ENCODE measurements at regions of chr15 and their contacts with region 1.

Region 1: DNA sequence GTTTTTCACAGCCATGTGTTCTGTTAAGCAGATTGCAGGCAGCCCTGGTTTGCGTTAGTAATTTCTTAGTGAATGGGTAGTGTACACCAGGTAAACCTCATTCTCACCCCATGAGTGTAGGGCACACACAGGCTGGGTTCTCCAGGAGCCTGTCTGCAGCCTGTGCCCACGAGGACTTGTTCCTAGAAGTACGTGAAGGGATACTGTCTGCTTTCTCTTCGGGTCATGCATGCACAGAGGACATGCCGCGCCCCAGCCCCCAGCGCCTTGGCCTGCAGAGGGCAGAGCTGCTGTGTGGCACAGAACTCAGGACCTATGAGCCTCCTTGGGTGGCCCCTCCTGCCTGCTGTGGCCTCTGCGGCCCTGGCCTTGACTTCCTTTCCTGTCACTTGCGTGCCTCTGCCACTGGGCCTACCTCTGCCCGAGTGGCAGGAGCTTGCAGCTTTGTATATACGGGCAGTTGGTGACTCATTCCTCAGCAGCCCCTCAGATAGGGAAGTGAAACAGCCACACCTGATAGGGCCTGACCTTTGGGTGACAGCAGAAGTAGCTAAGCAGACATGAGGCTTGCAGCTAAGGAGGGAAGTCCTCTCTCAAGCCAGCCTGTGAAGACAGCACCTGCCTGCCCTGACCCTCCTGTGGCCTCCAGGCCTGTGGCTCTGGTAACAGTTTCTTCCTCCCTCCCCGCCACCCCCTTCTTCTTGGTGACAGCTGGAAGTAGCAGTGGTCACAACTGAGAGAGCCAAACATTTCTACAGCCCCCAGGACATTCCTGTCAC is 19.5 kb downstream of the PPCDC start:
- DNase-seq: peak; percentile 81 to 89
- H3K4me3 ChIP-seq: peak overlapping the region in 1 of 2 donors; percentile 28
- H3K27ac ChIP-seq: peak overlapping the region; percentile 92 to 95
- H3K4me1 ChIP-seq: peaks cover 25 to 41% of the 10 kb centered on the region in 2 donors
- H3K27me3 ChIP-seq: no peaks in the 10 kb centered on the region
- CTCF ChIP-seq: peak; percentile 25 to 54 (median 50)

Region 2: GRCh38 chr15:74937596-74938296 is 105.2 kb before region 1 on chr15 and contains the start of gene COX5A:
- intact Hi-C with region 1: no loop called
- DNase-seq: peak; percentile 87 to 97
- H3K4me3 ChIP-seq: peak within 1 kb of the TSS; percentile 80 to 83
- H3K27ac ChIP-seq: peak within 1 kb of the TSS; percentile 87 to 88
- H3K4me1 ChIP-seq: peaks cover 8 to 24% of the 10 kb centered on the region in 2 donors
- H3K27me3 ChIP-seq: no peaks in the 10 kb centered on the region
- CTCF ChIP-seq: peak in 1 of 3 experiments; percentile 43
- total RNA-seq, gene COX5A: 83.5 TPM

Region 3: DNA sequence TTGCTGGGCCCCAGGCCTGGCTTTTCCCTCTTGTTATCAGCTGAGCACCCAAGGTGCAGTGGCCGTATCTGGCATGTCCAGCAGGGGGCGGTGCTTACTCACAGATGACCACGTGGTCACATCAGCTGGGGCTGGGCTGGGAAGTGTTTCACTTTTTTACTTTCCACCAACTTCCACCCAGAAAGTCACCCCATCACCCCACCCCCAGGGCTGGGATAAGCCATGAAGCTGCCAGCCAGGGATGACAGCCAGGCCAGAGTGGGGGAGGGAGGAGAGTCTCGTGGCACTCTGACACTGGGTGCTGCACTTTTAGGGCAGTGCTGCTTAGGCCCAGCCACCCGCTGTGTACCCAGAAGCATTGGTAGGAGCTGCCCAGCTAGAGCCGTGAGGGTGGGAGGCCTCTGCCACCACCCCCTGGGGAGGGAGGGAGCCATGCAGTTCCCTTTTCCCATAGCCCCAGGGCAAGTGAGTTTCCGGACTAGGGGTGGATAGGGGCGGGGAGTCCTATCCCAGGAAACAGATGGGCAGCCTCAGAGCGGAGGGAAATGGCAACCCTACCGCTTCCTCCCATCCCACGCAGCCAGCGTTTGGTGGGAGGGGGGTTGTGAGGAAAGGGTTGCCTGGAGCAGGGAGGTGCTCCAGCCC is 13.4 kb before region 1 on chr15:
- intact Hi-C with region 1: loop called (anchors 1 kb)
- DNase-seq: peak; percentile 78 to 97
- H3K4me3 ChIP-seq: peak overlapping the region; percentile 10 to 44
- H3K27ac ChIP-seq: peak overlapping the region; percentile 84 to 90
- H3K4me1 ChIP-seq: peaks cover 15 to 25% of the 10 kb centered on the region in 2 donors
- H3K27me3 ChIP-seq: no peaks in the 10 kb centered on the region
- CTCF ChIP-seq: peak; percentile 89 to 95 (median 92)

Region 4: GRCh38 chr15:75067123-75067830 is 24.4 kb after region 1 on chr15:
- intact Hi-C with region 1: loop called (anchors 2 kb)
- DNase-seq: no peak
- H3K4me3 ChIP-seq: no peak overlapping the region
- H3K27ac ChIP-seq: peak overlapping the region; percentile 26 to 74
- H3K4me1 ChIP-seq: peaks cover 0 to 30% of the 10 kb centered on the region in 2 donors
- H3K27me3 ChIP-seq: no peaks in the 10 kb centered on the region
- CTCF ChIP-seq: no peak

Region 5: DNA sequence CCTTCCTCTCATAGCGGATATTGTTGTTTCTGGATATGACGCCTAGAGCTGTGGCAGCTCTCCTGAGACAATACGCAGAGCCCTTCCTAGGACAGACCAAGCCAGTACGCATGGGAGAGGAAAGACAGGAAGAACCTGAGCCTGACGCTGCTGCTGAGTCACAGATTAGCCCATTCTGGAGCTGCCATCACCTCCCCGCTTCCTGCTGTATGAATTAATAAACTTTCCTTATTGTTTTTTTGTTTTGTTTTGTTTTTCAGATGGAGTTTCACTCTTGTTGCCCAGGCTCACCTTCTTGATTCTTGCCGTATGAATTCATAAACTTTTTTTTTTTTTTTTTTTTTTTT is 47.4 kb after region 1 on chr15:
- intact Hi-C with region 1: loop called (anchors 1 kb)
- DNase-seq: peak; percentile 36 to 86
- H3K4me3 ChIP-seq: peak overlapping the region in 1 of 2 donors; percentile 14
- H3K27ac ChIP-seq: peak overlapping the region; percentile 75 to 82
- H3K4me1 ChIP-seq: peaks cover 0 to 9% of the 10 kb centered on the region in 2 donors
- H3K27me3 ChIP-seq: no peaks in the 10 kb centered on the region
- CTCF ChIP-seq: no peak

Region 6: GRCh38 chr15:75130597-75131268 is 87.8 kb after region 1 on chr15:
- intact Hi-C with region 1: no loop called
- DNase-seq: no peak
- H3K4me3 ChIP-seq: no peak overlapping the region
- H3K27ac ChIP-seq: no peak overlapping the region
- H3K4me1 ChIP-seq: no peaks in the 10 kb centered on the region
- H3K27me3 ChIP-seq: no peaks in the 10 kb centered on the region
- CTCF ChIP-seq: no peak